Posterior vena cava (tissue), 2 donors: ENCODE measurements at regions of chr2 and their contacts with region 1.

Region 1: DNA sequence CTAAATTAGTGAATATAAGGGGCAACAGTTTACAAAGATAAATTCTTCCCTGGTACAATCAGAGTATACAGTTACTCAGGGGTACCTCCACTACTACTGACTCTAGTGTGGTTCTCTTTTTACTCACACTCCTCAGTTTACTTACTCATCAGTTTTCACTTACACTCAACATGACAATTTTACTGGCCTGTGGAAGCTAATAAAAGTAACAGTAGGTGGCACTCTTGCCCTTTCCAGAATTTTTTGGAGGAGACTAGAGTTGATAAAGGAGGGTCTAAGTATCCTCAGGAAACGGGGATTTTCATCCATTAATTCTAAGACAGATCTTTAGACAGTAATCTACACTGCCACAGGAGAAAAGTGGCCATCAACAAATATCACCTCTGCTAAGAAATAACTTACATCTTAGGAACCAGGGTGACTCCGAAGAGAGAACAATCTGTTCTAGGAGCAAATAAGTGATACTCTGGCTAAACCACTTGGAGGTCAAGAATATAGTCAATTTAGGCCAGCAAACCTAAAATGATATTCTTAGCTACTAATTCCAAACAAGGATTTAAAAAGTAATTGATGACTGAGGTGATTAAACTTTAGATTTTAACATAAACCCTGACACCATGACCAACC is 61.3 kb downstream of the ATL2 start:
- DNase-seq: no peak

Region 2: DNA sequence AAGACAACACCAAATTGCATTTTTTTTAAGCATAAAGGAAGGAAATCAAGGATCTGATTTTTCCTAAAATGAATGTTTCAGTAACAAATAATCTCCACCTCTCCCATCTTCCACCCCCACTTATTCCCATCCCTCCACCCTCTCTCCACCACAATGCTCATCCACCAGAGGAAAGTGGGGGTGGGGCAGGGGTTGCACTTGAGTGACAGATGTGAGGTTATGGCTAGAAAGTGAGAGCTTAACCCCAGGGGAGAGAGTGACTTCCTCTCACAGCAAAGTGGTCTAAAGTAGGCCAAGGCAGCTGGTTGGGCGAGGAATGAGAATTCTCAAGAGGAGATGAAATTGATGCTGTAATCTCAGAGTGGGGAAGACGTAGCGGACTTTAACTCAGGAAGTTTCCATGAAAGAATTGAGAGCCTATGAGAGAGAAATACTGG is 182.2 kb after region 1 on chr2:
- intact Hi-C with region 1: no loop called
- DNase-seq: no peak

Region 3: GRCh38 chr2:38560092-38560491 is 244.3 kb after region 1 on chr2:
- intact Hi-C with region 1: loop called in 1 of 2 experiments (anchors 10 kb)
- DNase-seq: no peak